Panc1 (cell line): ENCODE measurements at regions of chr13 and their contacts with region 1.

Region 1: GRCh38 chr13:98246538-98247172 is 69.6 kb upstream of the RNF113B start:
- DNase-seq: no peak
- ATAC-seq: no peak
- H3K4me3 ChIP-seq: no peak overlapping the region
- H3K27ac ChIP-seq: no peak overlapping the region
- H3K4me1 ChIP-seq: no peaks in the 10 kb centered on the region
- H3K27me3 ChIP-seq: no peaks in the 10 kb centered on the region
- CTCF ChIP-seq: no peak

Region 2: GRCh38 chr13:98083507-98083906 is 163.1 kb before region 1 on chr13:
- CTCF ChIA-PET with region 1: interaction called, 10 read pairs
- POLR2A ChIA-PET with region 1: no interaction called
- in situ Hi-C with region 1: no loop called
- intact Hi-C with region 1: no loop called
- DNase-seq: no peak
- ATAC-seq: no peak
- H3K4me3 ChIP-seq: no peak overlapping the region
- H3K27ac ChIP-seq: no peak overlapping the region
- H3K4me1 ChIP-seq: no peaks in the 10 kb centered on the region
- H3K27me3 ChIP-seq: no peaks in the 10 kb centered on the region
- CTCF ChIP-seq: no peak

Region 3: GRCh38 chr13:98384739-98385138 is 138.1 kb after region 1 on chr13:
- CTCF ChIA-PET with region 1: no interaction called
- POLR2A ChIA-PET with region 1: no interaction called
- in situ Hi-C with region 1: no loop called
- intact Hi-C with region 1: no loop called
- DNase-seq: no peak
- ATAC-seq: no peak
- H3K4me3 ChIP-seq: no peak overlapping the region
- H3K27ac ChIP-seq: no peak overlapping the region
- H3K4me1 ChIP-seq: no peaks in the 10 kb centered on the region
- H3K27me3 ChIP-seq: no peaks in the 10 kb centered on the region
- CTCF ChIP-seq: no peak

Region 4: DNA sequence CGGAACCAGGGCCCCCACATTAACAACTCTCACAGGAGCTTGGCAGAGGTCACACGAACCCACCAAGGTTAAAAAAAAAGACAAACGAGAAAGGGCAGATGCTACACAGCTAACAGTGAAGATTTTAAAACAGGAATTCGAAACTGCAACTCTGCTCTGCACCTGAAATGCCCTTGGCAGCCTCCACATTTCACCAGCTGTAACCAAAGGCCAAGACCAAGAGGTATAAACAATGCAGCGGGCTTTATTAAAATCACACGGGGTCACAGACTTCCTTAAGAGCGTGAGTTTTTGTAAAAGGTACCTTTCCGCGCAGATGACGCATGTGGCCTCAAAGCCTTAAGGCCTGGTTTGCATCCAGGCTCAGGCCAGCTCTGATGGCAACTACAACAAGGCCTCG is 242.1 kb after region 1 on chr13:
- CTCF ChIA-PET with region 1: no interaction called
- POLR2A ChIA-PET with region 1: no interaction called
- in situ Hi-C with region 1: no loop called
- intact Hi-C with region 1: no loop called
- DNase-seq: no peak
- ATAC-seq: no peak
- H3K4me3 ChIP-seq: no peak overlapping the region
- H3K27ac ChIP-seq: no peak overlapping the region
- H3K4me1 ChIP-seq: peaks cover 7% of the 10 kb centered on the region
- H3K27me3 ChIP-seq: no peaks in the 10 kb centered on the region
- CTCF ChIP-seq: no peak

Region 5: GRCh38 chr13:98542568-98543377 is 296.1 kb after region 1 on chr13:
- CTCF ChIA-PET with region 1: no interaction called
- POLR2A ChIA-PET with region 1: no interaction called
- in situ Hi-C with region 1: no loop called
- intact Hi-C with region 1: no loop called
- DNase-seq: no peak
- ATAC-seq: no peak
- H3K4me3 ChIP-seq: no peak overlapping the region
- H3K27ac ChIP-seq: no peak overlapping the region
- H3K4me1 ChIP-seq: peaks cover 11% of the 10 kb centered on the region; the same call in 1 of the 2 replicates
- H3K27me3 ChIP-seq: no peaks in the 10 kb centered on the region
- CTCF ChIP-seq: no peak